Activated CD8-positive, alpha-beta T cell treated with anti-CD3 and anti-CD28 coated beads for 36 hours (primary cell): ENCODE measurements at regions of chr1 and their contacts with region 1.

Region 1: GRCh38 chr1:88998716-88999115 is 6.3 kb upstream of the KYAT3 start:
- DNase-seq: peak; percentile 29
- ATAC-seq: peak; percentile 87
- H3K4me3 Mint-ChIP-seq: no peak overlapping the region
- H3K27ac Mint-ChIP-seq: no peak overlapping the region
- H3K4me1 Mint-ChIP-seq: peaks cover 36% of the 10 kb centered on the region
- H3K27me3 Mint-ChIP-seq: no peaks in the 10 kb centered on the region
- CTCF ChIP-seq: peak; percentile 60

Region 2: DNA sequence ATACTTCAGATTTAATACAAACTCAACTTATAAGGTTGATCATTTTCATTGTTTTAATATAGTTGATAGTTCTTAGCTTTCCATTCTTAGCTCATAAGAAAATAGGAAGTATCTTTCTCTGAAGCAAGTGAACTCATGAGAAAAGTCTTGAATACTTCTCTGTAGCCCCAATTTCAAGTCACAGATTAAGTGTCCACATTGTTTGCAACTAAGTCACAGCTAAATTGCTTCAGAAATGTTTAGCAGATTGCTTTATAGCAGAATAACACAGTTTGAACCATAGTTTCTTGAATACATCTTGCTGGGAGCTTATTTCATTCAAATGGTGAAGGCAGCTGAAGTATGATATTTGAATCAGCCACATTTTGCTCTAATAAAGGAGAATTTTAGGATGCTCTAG is 325.3 kb before region 1 on chr1:
- CTCF ChIA-PET with region 1: no interaction called
- POLR2A ChIA-PET with region 1: no interaction called
- intact Hi-C with region 1: no loop called
- DNase-seq: no peak
- ATAC-seq: no peak
- H3K4me3 Mint-ChIP-seq: no peak overlapping the region
- H3K27ac Mint-ChIP-seq: no peak overlapping the region
- H3K4me1 Mint-ChIP-seq: peaks cover under 1% of the 10 kb centered on the region
- H3K27me3 Mint-ChIP-seq: peaks cover 9% of the 10 kb centered on the region
- CTCF ChIP-seq: no peak

Region 3: DNA sequence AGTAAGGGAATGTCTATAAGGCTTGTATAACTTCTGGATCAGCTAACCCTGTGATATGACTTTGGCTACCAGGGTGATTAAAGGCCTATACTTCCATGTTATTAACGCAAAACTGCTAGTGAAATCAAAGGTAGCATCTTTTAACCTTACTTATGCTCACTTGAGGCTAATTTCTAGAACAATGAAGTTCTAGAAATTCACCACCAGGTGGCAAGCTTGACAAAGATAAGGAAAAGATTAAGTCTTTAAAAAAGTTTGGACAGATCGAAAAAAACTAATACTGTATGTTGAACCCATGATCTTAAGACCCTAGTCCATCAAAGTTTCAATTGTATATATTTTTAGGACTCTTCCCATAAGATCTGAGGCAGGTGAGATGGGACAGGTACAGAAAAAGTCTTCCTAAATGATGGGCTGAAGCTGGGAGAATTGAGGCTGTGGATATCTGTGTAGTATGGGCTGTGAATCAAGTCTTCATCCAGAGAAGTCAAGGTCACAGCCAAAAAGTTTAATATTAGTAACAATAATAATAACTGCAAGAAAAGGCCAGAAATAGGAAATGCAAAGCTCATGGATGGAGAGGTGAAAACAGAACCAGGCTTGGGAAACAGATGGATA is 25.1 kb before region 1 on chr1:
- CTCF ChIA-PET with region 1: interaction called, 11 read pairs
- POLR2A ChIA-PET with region 1: no interaction called
- intact Hi-C with region 1: no loop called
- DNase-seq: no peak
- ATAC-seq: peak; percentile 68
- H3K4me3 Mint-ChIP-seq: no peak overlapping the region
- H3K27ac Mint-ChIP-seq: no peak overlapping the region
- H3K4me1 Mint-ChIP-seq: peaks cover 32% of the 10 kb centered on the region
- H3K27me3 Mint-ChIP-seq: no peaks in the 10 kb centered on the region
- CTCF ChIP-seq: peak; percentile 78

Region 4: GRCh38 chr1:88983791-88984559 is 14.7 kb before region 1 on chr1:
- CTCF ChIA-PET with region 1: interaction called, 15 read pairs
- POLR2A ChIA-PET with region 1: no interaction called
- intact Hi-C with region 1: no loop called
- DNase-seq: peak; percentile 48
- ATAC-seq: peak; percentile 63
- H3K4me3 Mint-ChIP-seq: peak overlapping the region; percentile 6
- H3K27ac Mint-ChIP-seq: peak overlapping the region; percentile 87
- H3K4me1 Mint-ChIP-seq: peaks cover 86% of the 10 kb centered on the region
- H3K27me3 Mint-ChIP-seq: no peaks in the 10 kb centered on the region
- CTCF ChIP-seq: peak; percentile 77

Region 5: DNA sequence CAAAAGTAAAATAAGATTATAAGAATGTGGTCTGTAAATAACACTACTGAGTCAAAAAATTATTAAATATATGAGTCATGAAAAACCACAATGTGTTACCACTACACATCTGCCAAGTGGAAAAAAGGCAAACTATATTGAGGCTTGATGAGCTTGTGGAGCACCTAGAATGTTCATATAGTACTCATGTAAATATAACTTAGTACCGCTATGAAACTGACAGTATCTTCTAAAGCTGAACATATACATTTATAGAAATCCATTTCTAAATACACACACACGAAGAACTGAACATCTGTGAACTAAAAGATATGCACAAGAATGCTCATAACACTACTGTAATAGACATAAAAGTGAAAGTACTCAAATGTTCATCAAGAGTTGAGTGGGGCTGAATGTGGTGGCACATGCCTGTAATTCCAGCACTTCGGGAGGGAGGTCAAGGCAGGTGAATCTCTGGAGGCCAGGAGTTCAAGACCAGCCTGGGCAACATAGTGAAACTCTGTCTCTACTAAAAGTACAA is 42.5 kb after region 1 on chr1:
- CTCF ChIA-PET with region 1: interaction called, 5 read pairs
- POLR2A ChIA-PET with region 1: no interaction called
- intact Hi-C with region 1: loop called (anchors 2 kb)
- DNase-seq: peak; percentile 43
- ATAC-seq: peak; percentile 88
- H3K4me3 Mint-ChIP-seq: peak overlapping the region; percentile 51
- H3K27ac Mint-ChIP-seq: peak overlapping the region; percentile 88
- H3K4me1 Mint-ChIP-seq: peaks cover 43% of the 10 kb centered on the region
- H3K27me3 Mint-ChIP-seq: peaks cover 2% of the 10 kb centered on the region
- CTCF ChIP-seq: no peak

Region 6: GRCh38 chr1:89065079-89065868 is 66.6 kb after region 1 on chr1 and contains the start of gene GBP1:
- CTCF ChIA-PET with region 1: interaction called, 12 read pairs
- POLR2A ChIA-PET with region 1: interaction called, 3 read pairs
- intact Hi-C with region 1: no loop called
- DNase-seq: no peak
- ATAC-seq: peak; percentile 77
- H3K4me3 Mint-ChIP-seq: peak within 1 kb of the TSS; percentile 97
- H3K27ac Mint-ChIP-seq: peak within 1 kb of the TSS; percentile 92
- H3K4me1 Mint-ChIP-seq: peaks cover 57% of the 10 kb centered on the region
- H3K27me3 Mint-ChIP-seq: no peaks in the 10 kb centered on the region
- CTCF ChIP-seq: no peak
- total RNA-seq, gene GBP1: 69.6 to 71.5 TPM

Region 7: GRCh38 chr1:89085781-89086180 is 87.1 kb after region 1 on chr1:
- CTCF ChIA-PET with region 1: interaction called, 13 read pairs
- POLR2A ChIA-PET with region 1: no interaction called
- intact Hi-C with region 1: no loop called
- DNase-seq: peak; percentile 59
- ATAC-seq: no peak
- H3K4me3 Mint-ChIP-seq: no peak overlapping the region
- H3K27ac Mint-ChIP-seq: no peak overlapping the region
- H3K4me1 Mint-ChIP-seq: peaks cover 7% of the 10 kb centered on the region
- H3K27me3 Mint-ChIP-seq: no peaks in the 10 kb centered on the region
- CTCF ChIP-seq: peak; percentile 42

Region 8: DNA sequence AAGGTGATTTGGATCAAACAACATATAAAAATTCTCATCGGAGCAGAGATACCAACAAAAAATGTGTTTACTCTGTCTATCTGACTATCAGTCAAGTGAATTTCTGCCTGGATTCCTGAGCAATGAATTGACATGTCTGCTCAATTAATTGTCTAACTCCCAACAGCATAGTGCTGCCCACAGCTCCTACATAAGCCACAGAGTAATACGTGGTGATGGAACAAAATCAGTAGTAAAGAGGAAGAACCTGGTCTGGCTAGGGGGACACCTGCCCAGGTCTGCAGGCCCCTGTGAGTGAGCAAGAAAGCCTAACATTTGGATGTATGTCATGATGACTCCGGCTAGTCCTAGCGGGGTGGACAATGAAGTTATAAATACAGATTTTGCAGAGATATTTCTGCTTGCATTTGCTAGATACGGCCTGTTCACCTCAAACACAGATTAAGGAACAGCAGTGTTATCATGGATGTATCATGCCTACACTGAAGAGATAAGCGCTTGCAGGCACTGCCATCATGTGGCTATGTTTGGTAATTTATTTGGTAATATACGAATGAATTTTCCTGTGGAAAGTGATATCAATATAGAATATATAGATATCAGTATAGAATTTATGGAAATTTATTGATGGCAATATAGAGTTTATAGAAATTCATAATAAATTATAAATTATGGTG is 456.3 kb after region 1 on chr1:
- CTCF ChIA-PET with region 1: interaction called, 15 read pairs
- POLR2A ChIA-PET with region 1: no interaction called
- intact Hi-C with region 1: loop called (anchors 5 kb)
- DNase-seq: peak; percentile 79
- ATAC-seq: peak; percentile 64
- H3K4me3 Mint-ChIP-seq: no peak overlapping the region
- H3K27ac Mint-ChIP-seq: no peak overlapping the region
- H3K4me1 Mint-ChIP-seq: peaks cover 29% of the 10 kb centered on the region
- H3K27me3 Mint-ChIP-seq: peaks cover 21% of the 10 kb centered on the region
- CTCF ChIP-seq: peak; percentile 90